HepG2 (cell line): ENCODE measurements at regions of chr1 and their contacts with region 1.

Region 1: DNA sequence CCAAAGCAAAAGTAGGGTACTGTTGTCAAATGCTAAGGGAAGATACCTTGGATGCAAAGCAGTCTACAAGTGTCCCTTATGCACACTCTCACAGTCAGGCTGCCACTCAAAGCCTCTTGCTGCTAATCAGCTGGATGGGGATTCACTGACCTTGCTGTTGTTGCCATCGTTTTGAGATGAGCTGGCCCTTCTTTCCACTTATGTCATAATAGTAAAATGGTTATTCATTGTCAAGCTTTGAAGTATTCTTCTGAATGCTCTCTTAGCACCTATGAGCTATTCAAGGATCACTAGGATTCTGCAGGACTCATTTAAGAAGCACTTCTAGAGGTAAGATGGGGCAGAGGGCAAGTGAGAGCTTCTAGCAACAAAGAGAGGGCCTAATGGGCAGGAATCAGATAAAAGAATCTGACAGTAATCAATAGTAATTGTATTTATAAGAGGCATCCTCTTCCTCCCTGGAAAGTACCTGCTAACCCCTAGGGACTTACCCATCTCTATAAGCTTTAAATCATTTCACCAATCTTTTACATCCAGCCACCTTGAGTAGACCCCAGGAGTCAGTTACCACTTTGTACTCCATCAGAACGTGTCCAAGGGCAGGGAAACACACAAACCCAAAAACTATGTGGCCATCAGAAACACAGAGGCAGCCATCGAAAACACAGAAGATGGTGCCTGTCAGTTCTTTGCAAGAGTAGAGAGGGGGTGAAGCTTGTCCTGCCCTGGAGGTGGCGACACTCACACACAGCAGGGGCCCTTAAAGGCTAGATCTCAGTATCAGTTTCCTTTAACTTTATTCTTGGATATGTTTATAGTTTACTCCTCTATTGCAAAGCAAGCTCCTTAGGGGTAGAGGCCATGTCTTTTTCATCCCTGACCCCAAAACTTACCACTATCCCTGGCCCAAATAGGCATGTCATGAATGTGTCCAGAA is 103.7 kb upstream of the NFIA start:
- DNase-seq: peak; percentile 26
- ATAC-seq: peak; percentile 98
- H3K4me3 ChIP-seq: no peak overlapping the region
- H3K27ac ChIP-seq: no peak overlapping the region
- H3K4me1 ChIP-seq: no peaks in the 10 kb centered on the region
- H3K27me3 ChIP-seq: peaks cover 0 to 7% of the 10 kb centered on the region in 2 experiments; a peak in 1 of 5 replicates
- CTCF ChIP-seq: peak; percentile 78
- EP300 ChIP-seq: no peak
- POLR2A ChIP-seq: no peak
- RAD21 ChIP-seq: peak; percentile 66

Region 2: DNA sequence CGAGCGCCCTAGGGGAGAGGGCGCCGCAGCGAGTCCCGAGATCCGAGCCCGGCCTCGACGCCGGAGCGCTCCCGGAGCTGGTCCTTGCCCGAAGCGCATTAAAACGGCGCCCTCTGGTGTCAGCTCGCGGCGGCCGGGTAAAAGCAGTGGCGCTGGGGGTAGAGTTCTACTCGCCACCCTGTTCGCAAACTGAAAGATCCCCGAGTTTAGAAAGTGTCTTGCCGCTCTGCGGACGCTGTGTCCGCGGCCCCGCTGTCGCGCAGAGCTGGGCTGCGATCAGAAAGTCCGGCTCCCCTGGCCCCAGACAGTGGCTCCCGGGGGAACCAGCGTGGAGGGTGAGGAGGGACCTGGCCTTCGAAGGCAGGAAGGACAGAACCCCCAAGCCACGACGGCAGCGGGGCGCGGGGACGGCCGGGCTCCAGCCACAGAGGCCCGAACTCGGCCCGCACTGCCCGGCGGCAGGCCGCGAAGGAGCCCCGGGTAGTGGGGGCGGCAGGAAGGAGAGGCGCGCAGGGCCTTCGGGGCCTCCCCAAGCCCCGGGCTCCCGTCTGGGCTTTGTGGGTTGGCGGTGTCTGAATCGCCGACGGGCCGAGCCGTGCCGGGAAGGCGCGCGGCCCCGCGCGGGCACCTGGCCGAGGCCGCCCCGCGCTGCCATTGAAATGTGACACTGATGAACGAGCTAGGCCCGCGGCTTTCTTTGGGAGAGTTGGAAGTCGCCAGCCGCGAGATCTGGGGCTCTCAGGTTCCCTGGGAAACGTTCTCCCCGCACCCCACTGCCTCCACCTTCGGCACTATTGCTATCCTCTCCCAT is 64.5 kb after region 1 on chr1:
- CTCF ChIA-PET with region 1: interaction called, 3 read pairs
- POLR2A ChIA-PET with region 1: no interaction called
- in situ Hi-C with region 1: loop called (anchors 5 kb)
- intact Hi-C with region 1: loop called (anchors 2 kb)
- DNase-seq: peak; percentile 37
- ATAC-seq: peak; percentile 99
- H3K4me3 ChIP-seq: peak overlapping the region; percentile 26 to 75 (median 52); a peak in 5 of 6 replicates
- H3K27ac ChIP-seq: no peak overlapping the region
- H3K4me1 ChIP-seq: peaks cover 6% of the 10 kb centered on the region; the same call in 1 of the 2 replicates
- H3K27me3 ChIP-seq: peaks cover 2 to 16% of the 10 kb centered on the region in 2 experiments; a peak in 4 of 5 replicates
- CTCF ChIP-seq: peak; percentile 94
- EP300 ChIP-seq: no peak
- POLR2A ChIP-seq: no peak
- RAD21 ChIP-seq: peak; percentile 88

Region 3: GRCh38 chr1:61253059-61253735 is 274.5 kb after region 1 on chr1:
- CTCF ChIA-PET with region 1: no interaction called
- POLR2A ChIA-PET with region 1: no interaction called
- in situ Hi-C with region 1: no loop called
- intact Hi-C with region 1: no loop called
- DNase-seq: peak; percentile 66
- ATAC-seq: no peak
- H3K4me3 ChIP-seq: no peak overlapping the region
- H3K27ac ChIP-seq: no peak overlapping the region
- H3K4me1 ChIP-seq: peaks cover 46% of the 10 kb centered on the region
- H3K27me3 ChIP-seq: no peaks in the 10 kb centered on the region
- CTCF ChIP-seq: no peak
- EP300 ChIP-seq: peak in 1 of 2 experiments; percentile 16; a peak in 1 of 4 replicates
- POLR2A ChIP-seq: no peak
- RAD21 ChIP-seq: no peak

Region 4: GRCh38 chr1:61362351-61362750 is 383.7 kb after region 1 on chr1:
- CTCF ChIA-PET with region 1: no interaction called
- POLR2A ChIA-PET with region 1: no interaction called
- in situ Hi-C with region 1: no loop called
- intact Hi-C with region 1: loop called (anchors 5 kb)
- DNase-seq: no peak
- ATAC-seq: no peak
- H3K4me3 ChIP-seq: no peak overlapping the region
- H3K27ac ChIP-seq: no peak overlapping the region
- H3K4me1 ChIP-seq: peaks cover 11% of the 10 kb centered on the region; the same call in 1 of the 2 replicates
- H3K27me3 ChIP-seq: no peaks in the 10 kb centered on the region
- CTCF ChIP-seq: no peak
- EP300 ChIP-seq: no peak
- POLR2A ChIP-seq: no peak
- RAD21 ChIP-seq: no peak

Region 5: DNA sequence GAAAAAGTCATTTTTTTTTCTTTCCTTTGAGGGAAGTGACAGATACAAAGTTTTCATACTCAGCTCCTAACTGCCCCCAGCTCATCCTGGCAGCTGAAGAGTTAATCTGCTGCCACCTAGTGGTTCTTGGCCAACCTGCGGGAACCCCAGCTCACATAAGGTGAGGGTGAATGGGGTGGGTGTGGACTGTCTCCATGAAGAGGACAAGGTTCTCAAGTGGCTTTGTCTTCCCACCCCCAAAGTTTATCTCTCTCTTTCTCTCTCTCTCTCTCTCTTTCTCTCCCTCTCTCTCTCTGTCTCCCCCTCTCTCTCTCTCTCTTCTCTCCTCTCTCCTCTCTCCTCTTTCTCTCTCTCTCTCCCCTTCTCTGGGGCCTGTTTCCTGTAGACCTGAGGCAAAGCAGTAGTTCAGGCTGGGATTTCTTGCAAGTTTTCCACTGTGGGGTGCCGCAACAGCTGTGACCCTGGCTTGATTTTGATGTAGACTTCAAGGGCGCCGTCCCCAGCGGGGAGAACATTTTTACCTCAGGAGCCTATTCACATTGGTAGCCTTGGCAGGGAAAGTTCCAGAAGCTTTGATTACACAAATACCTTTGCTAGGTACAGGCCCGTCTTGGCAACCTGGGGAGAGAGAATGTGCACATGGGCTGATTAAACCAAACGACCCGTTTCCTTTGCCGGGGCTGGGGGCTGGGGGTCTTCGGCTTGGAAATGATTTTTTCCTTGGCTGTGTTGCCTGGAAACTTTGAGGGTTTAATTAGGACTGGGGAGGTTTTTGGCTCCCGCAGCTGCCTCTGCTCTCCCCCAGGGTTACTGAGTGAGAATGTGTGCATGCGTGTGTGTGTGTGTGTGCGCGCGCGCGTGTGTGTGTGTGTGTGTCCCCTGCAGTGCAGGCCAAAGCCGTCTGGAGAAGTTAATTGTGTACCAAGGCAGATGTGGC is 610.3 kb after region 1 on chr1:
- CTCF ChIA-PET with region 1: no interaction called
- POLR2A ChIA-PET with region 1: no interaction called
- in situ Hi-C with region 1: no loop called
- intact Hi-C with region 1: loop called (anchors 2 kb)
- DNase-seq: peak; percentile 62
- ATAC-seq: peak; percentile 99
- H3K4me3 ChIP-seq: no peak overlapping the region
- H3K27ac ChIP-seq: no peak overlapping the region
- H3K4me1 ChIP-seq: no peaks in the 10 kb centered on the region
- H3K27me3 ChIP-seq: peaks cover 0 to 10% of the 10 kb centered on the region in 2 experiments; a peak in 4 of 5 replicates
- CTCF ChIP-seq: peak; percentile 89
- EP300 ChIP-seq: no peak
- POLR2A ChIP-seq: no peak
- RAD21 ChIP-seq: peak; percentile 54

Region 6: DNA sequence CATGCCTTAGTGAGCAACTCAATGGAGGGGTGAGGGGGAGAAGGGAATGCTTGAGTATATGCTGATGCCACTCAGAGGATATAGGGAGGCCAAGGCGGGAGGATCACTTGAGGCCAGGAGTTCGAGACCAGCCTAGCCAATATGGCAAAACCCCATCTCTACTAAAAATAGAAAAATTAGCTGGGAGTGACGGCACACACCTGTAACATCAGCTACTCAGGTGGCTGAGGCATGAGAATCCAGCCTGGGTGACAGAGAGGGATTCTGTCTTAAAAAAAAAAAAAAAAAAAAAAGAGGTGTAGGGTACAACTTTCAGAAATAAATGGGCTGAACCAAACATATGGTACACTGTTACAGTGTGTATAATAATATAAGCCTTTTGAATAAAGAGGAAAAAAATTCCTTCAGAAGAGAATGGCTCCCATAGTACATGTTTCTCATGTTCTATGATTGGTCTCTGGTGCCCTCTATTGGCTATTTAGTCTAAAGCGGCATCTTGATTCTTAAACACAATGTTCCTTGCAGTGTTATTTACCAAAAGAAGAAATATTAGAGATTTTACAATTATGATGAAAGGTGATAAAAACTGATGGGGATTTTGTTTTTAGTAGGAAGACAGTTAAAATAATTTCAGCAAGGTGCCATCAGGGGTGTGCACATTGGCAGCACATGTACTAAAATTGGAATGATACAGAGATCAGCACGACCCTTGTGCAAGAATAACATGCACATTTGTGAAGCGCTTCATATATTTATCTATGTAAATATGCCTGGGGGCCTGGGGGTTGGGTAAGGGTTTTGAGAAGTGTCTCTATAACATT is 873.4 kb after region 1 on chr1:
- CTCF ChIA-PET with region 1: no interaction called
- POLR2A ChIA-PET with region 1: no interaction called
- in situ Hi-C with region 1: loop called (anchors 10 kb)
- intact Hi-C with region 1: loop called (anchors 5 kb)
- DNase-seq: peak; percentile 47
- ATAC-seq: peak; percentile 65
- H3K4me3 ChIP-seq: no peak overlapping the region
- H3K27ac ChIP-seq: no peak overlapping the region
- H3K4me1 ChIP-seq: no peaks in the 10 kb centered on the region
- H3K27me3 ChIP-seq: no peaks in the 10 kb centered on the region
- CTCF ChIP-seq: peak; percentile 66
- EP300 ChIP-seq: no peak
- POLR2A ChIP-seq: no peak
- RAD21 ChIP-seq: peak; percentile 16; the same call in 1 of the 2 replicates